ENCODE measurements at regions of chr3 and their contacts with region 1.

Region 1: DNA sequence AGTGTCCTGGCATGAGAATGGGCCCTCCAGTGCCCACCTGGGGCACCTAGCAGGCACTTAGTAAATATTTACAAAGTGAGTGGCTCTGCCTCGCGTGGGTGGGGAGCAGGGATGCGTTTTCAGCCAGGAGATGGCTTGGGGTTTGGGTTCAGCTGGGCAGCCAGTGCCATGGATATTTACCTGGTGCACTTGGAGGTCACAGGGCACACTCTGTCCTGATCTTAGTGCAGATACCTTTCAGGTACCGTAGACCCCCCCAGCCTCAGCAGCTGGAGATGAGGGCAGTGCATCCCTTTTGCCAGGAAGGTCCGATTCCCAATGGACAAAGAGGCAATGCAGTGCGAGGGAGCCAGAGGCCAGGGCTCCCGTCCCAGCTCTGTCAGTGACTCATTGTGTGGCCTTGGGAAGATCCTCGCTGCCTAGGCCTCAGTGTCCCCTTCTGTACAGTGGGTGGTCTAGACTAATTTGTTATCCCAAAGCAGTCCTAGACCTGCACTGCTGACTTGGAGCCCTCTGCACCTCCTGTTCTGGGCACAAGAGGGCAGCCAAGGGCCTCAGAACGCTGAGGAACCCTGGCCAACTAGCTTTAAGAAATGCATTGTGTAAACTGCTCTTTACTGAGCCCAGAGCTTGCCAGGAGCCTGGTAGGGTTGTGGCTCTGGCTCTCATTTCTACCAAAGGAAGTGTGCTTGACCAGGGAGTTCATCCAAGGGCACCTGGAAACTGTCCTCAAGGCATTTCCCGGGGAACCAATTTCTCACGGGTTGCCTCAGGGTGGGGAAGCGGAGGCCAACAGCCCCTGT is 16.0 kb downstream of the HDAC11 start:
- DNase-seq: peak; percentile 74 to 87 (median 80)
- ATAC-seq: peak; percentile 95
- H3K4me3 ChIP-seq: no peak overlapping the region
- H3K27ac ChIP-seq: no peak overlapping the region
- H3K4me1 ChIP-seq: peaks cover 0 to 16% of the 10 kb centered on the region in 2 experiments; a peak in 3 of 5 replicates
- H3K27me3 ChIP-seq: no peaks in the 10 kb centered on the region
- CTCF ChIP-seq: peak; percentile 97 to 98 (median 98)
- EP300 ChIP-seq: no peak
- POLR2A ChIP-seq: no peak
- RAD21 ChIP-seq: peak; percentile 98 to 99

Region 2: DNA sequence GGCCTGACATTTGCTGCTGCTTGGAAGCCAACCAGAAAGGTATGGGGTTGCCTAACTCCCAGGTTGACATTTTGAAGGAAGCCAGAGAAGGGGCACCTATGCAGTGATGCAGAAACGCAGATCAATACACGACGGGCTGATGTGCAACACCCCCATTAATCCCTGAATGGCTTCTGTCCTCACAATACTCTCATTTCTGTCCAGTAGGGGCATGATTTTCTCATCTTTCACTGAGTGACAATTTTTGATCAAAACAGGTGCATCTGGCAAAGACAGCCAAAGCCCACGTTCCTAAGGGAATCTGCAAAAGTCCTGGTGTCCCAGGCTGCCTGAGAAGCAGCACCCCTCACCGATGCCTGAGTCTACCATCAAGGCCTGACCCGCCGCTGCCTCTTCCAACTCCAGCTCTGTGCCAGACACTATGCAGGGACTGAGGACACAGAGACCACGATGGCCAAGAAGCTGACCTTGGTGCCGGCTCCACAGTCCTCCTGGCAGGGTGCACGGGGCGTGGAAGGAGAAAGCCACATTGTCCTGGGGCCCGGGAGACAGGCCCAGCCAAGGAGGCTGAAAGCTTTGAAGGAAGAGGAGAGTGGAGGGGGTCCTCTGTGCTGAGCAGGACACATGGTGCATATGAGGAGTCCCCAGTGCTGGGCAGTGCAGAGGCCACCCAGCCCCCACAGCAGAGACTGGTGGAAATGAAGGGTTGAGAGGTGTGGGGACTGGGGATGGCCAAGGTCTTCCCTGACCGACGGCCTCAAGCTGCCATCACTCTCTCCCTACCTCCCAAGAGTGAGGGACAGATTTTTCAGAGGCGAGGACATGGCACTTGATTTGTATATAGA is 235.6 kb before region 1 on chr3:
- CTCF ChIA-PET with region 1: no interaction called
- POLR2A ChIA-PET with region 1: no interaction called
- in situ Hi-C with region 1: no loop called
- intact Hi-C with region 1: no loop called
- DNase-seq: no peak
- ATAC-seq: peak; percentile 56
- H3K4me3 ChIP-seq: no peak overlapping the region
- H3K27ac ChIP-seq: no peak overlapping the region
- H3K4me1 ChIP-seq: peaks cover 10 to 15% of the 10 kb centered on the region in 2 experiments; a peak in 4 of 5 replicates
- H3K27me3 ChIP-seq: peaks cover 29 to 82% of the 10 kb centered on the region in 2 experiments
- CTCF ChIP-seq: peak; percentile 34 to 55 (median 40); a peak in 3 of 6 replicates
- EP300 ChIP-seq: no peak
- POLR2A ChIP-seq: no peak
- RAD21 ChIP-seq: 0 out of 4 replicates have a peak, but pooled peaks of 1 of the 2 experiments have one; percentile 10

Region 3: DNA sequence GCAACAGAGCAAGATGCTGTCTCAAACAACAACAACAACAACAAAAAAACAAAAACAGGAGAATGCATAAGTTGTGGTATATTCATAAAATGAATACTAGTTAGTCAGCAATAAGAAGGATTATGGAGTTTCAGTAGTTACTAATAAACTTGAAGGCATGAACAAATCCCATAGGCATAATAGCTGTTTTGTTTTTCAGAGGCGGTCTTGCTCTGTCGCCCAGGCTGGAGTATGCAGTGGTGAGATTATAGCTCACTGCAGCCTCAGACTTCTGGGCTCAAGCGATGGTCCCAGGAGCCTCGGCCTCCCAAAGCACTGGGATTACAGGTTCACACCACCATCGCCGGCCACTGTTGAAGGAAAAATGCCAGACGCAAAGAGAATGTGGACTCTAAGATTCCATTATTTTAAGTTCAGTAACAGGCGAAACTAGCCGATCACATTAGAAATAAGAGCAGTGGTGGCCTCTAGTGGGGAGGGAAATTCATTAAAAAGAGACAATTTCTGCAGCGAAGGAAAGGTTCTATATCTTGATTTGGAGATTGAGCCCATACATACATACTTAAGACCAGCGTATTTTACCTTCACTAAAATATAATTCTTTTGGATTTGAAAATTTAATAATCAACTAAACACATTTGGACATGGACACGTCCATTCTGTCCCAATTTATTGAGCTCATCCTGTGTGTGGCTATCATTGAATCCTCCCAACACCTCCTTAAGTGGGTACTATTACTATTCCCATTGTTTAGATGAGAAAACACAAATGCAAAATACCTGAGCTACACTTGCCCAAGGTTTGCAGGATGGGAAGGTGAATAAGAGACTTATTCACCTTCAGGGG is 43.4 kb before region 1 on chr3:
- CTCF ChIA-PET with region 1: no interaction called
- POLR2A ChIA-PET with region 1: no interaction called
- in situ Hi-C with region 1: no loop called
- intact Hi-C with region 1: no loop called
- DNase-seq: peak; percentile 58 to 80 (median 61)
- ATAC-seq: peak; percentile 59
- H3K4me3 ChIP-seq: peak overlapping the region; percentile 43
- H3K27ac ChIP-seq: peak overlapping the region; percentile 39; the same call in 1 of the 3 replicates
- H3K4me1 ChIP-seq: peaks cover 16 to 24% of the 10 kb centered on the region in 2 experiments; a peak in 4 of 5 replicates
- H3K27me3 ChIP-seq: no peaks in the 10 kb centered on the region
- CTCF ChIP-seq: peak; percentile 62 to 92 (median 83)
- EP300 ChIP-seq: no peak
- POLR2A ChIP-seq: no peak
- RAD21 ChIP-seq: peak; percentile 87 to 90

Region 4: GRCh38 chr3:13537921-13538320 is 41.8 kb after region 1 on chr3:
- CTCF ChIA-PET with region 1: interaction called, 5 read pairs
- POLR2A ChIA-PET with region 1: interaction called, 3 read pairs
- in situ Hi-C with region 1: no loop called
- intact Hi-C with region 1: loop called (anchors 5 kb)
- DNase-seq: peak in 3 of 4 experiments; percentile 48 to 56 (median 53)
- ATAC-seq: no peak
- H3K4me3 ChIP-seq: no peak overlapping the region
- H3K27ac ChIP-seq: no peak overlapping the region
- H3K4me1 ChIP-seq: no peaks in the 10 kb centered on the region; a peak in 2 of 5 replicates
- H3K27me3 ChIP-seq: peaks cover 35 to 67% of the 10 kb centered on the region in 2 experiments
- CTCF ChIP-seq: no peak
- EP300 ChIP-seq: no peak
- POLR2A ChIP-seq: no peak
- RAD21 ChIP-seq: no peak

Region 5: GRCh38 chr3:13884851-13885703 is 389.0 kb after region 1 on chr3:
- CTCF ChIA-PET with region 1: no interaction called
- POLR2A ChIA-PET with region 1: interaction called, 3 read pairs
- in situ Hi-C with region 1: loop called (anchors 10 kb)
- intact Hi-C with region 1: loop called (anchors 5 kb)
- DNase-seq: peak; percentile 70 to 82 (median 80)
- ATAC-seq: peak; percentile 90
- H3K4me3 ChIP-seq: no peak overlapping the region
- H3K27ac ChIP-seq: no peak overlapping the region
- H3K4me1 ChIP-seq: peaks cover 4 to 9% of the 10 kb centered on the region in 2 experiments
- H3K27me3 ChIP-seq: peaks cover 11 to 32% of the 10 kb centered on the region in 2 experiments; a peak in 4 of 5 replicates
- CTCF ChIP-seq: peak; percentile 86 to 96 (median 89)
- EP300 ChIP-seq: no peak
- POLR2A ChIP-seq: no peak
- RAD21 ChIP-seq: peak; percentile 53 to 87